Left ventricle myocardium superior (tissue), 1 donor: ENCODE measurements at regions of chr7 and their contacts with region 1.

Region 1: GRCh38 chr7:18196638-18197037 is 169.0 kb upstream of the PRPS1L1 start:
- DNase-seq: no peak
- ATAC-seq: no peak

Region 2: DNA sequence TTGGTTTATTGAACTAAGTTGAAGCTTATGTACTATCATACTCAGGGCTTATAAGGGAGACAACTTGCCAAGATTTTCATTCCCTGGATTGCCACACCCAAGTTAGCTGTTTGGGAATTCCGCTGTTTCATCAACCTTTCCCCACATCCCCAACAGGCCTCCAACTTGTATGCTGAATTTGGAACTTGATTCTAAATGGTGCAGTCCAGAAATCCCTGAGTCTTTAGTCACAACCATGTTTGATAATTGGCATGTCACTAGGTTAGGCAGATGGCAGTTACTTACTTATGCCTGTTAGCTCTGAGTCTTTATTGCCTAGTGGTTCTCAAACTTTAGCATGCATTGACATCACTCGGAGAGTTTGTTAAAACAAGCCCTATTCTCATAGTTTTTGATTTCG is 33.5 kb before region 1 on chr7:
- intact Hi-C with region 1: loop called (anchors 5 kb)
- DNase-seq: no peak
- ATAC-seq: no peak